H1 (cell line): ENCODE measurements at regions of chr11 and their contacts with region 1.

Region 1: DNA sequence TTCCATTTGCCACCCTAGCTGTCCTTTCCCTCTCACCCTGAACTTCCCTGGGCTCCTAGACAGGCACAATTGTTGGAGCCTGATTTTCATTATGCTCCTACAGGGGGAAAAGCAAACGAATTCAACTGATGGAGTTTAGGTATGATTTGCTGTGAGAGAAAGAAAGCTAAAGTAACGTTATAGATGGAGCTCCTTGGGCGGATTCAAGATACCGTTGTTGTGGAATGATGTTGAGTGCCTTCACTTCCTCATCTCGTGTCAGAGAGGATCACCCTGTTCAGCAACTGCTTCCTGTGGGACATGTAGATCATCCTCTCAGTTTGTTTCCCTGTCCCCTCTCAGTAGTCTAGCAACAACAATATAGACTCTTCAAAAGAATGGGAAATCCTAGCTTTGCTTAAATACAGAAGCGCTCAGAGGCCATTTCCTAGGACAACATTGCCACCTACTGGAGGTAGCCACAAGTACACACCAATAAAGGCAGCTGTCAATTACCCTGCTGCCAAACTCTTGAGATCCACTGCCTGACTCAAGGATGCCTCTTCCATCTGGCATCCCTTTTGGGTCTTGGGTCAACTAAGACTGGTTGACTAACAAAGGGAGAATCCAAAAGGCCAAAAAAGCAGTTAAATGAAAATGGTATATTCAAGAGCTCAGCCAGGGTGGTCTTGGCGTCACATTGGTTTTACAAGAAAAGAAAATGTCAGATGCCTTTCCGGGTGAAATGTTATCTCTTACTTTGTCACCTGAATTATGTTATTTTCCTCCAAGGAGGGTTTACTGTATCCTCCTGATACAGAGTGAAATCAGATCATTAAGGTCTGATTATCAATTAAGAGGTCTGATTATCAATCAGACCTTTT is 13.5 kb upstream of the DTX4 start:
- DNase-seq: peak in 1 of 2 experiments; percentile 67
- H3K4me3 ChIP-seq: no peak overlapping the region
- H3K27ac ChIP-seq: no peak overlapping the region; the same call in 1 of the 2 replicates
- H3K4me1 ChIP-seq: peaks cover 0 to 4% (median 0%) of the 10 kb centered on the region in 4 experiments; a peak in 2 of 7 replicates
- H3K27me3 ChIP-seq: no peaks in the 10 kb centered on the region
- CTCF ChIP-seq: peak; percentile 29 to 87 (median 80)
- EP300 ChIP-seq: no peak
- POLR2A ChIP-seq: no peak
- RAD21 ChIP-seq: peak; percentile 91 to 92

Region 2: DNA sequence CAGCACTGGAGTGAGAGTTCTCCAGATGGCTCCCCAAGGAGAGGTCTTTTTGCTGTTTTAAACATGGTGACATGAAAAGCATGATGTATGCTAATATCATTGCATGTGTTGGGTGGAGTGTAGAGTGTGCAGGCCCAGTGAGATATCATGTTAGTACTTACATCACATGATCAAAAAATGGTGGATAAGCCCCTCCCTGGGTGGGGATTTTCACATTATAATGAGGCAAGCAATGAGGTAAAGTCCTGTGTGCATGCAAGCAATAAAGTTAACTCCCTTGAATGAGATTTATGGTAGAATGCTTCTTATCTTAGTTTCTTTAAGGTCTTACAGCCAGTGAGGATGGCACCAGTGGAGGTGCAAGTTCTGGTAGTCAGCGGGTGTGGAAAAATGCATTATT is 42.9 kb before region 1 on chr11:
- CTCF ChIA-PET with region 1: no interaction called
- POLR2A ChIA-PET with region 1: no interaction called
- DNase-seq: no peak
- H3K4me3 ChIP-seq: no peak overlapping the region
- H3K27ac ChIP-seq: no peak overlapping the region
- H3K4me1 ChIP-seq: no peaks in the 10 kb centered on the region
- H3K27me3 ChIP-seq: no peaks in the 10 kb centered on the region
- CTCF ChIP-seq: no peak
- EP300 ChIP-seq: no peak
- POLR2A ChIP-seq: no peak
- RAD21 ChIP-seq: no peak

Region 3: DNA sequence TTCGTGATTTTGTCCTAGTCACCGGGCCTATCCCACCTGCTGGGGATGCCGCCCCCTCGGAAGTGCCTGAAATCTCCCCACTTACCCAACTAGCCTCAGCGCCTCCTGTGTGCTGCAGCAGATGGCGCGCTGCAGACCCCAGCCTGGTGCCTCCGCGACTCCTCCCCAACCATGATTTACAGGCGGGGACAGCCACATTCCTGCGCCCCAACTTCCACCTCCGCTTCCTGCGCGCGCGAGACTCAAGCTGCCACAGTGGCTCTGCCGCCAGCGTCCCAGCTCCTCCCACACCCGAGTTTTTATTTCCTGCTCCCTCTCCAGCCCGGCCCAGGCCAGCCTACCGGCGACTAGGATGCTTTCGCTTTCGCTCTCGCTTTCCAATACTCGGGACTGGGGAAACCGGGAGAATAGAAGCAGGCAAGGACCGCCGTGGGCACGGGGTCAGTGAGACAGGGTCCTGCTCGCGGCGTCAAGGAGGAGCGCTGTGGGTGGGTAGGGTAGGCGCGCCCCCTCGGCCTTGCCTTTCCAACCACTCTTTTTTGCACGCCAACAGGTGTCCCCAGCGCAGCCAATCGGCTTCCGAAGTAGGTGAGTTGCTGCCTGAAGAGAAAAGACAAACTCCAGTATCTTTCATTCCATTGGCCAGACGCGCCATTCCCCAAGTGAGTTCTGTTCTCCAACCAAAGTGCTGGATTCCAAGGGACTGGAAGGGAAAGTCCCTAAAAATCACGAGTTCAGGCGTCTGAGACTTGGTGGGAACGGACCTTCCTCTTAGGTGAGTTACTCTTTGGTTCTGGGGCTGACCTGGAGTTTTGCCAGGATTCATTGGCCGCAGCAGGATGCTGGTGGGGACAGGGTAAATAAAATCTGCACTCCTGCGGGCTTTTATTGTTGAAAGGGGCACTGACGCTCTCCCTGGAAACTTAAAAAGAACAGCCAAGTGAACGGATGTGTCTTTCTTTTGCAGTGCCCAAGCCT is 15.6 kb before region 1 on chr11 and contains the start of gene FAM111A:
- CTCF ChIA-PET with region 1: interaction called, 65 read pairs
- POLR2A ChIA-PET with region 1: interaction called, 12 read pairs
- DNase-seq: peak; percentile 67 to 83
- H3K4me3 ChIP-seq: peak within 1 kb of the TSS; percentile 54 to 86 (median 77)
- H3K27ac ChIP-seq: peak within 1 kb of the TSS; percentile 65; the same call in 1 of the 2 replicates
- H3K4me1 ChIP-seq: peaks cover 0 to 8% (median 0%) of the 10 kb centered on the region in 4 experiments; a peak in 4 of 7 replicates
- H3K27me3 ChIP-seq: no peaks in the 10 kb centered on the region; a peak in 1 of 7 replicates
- CTCF ChIP-seq: peak; percentile 25 to 55 (median 29); a peak in 3 of 4 replicates
- EP300 ChIP-seq: no peak
- POLR2A ChIP-seq: peak in 1 of 2 experiments; percentile 18; a peak in 1 of 3 replicates
- RAD21 ChIP-seq: no peak; a peak in 1 of 4 replicates
- total RNA-seq, gene FAM111A: 29.9 and 31.1 TPM in 2 replicates

Region 4: GRCh38 chr11:59186130-59186594 is 27.7 kb after region 1 on chr11:
- CTCF ChIA-PET with region 1: interaction called, 22 read pairs
- POLR2A ChIA-PET with region 1: no interaction called
- DNase-seq: peak in 1 of 2 experiments; percentile 82
- H3K4me3 ChIP-seq: no peak overlapping the region
- H3K27ac ChIP-seq: no peak overlapping the region
- H3K4me1 ChIP-seq: peaks cover 0 to 4% (median 0%) of the 10 kb centered on the region in 4 experiments; a peak in 2 of 7 replicates
- H3K27me3 ChIP-seq: no peaks in the 10 kb centered on the region
- CTCF ChIP-seq: peak; percentile 65 to 73 (median 72)
- EP300 ChIP-seq: no peak
- POLR2A ChIP-seq: no peak
- RAD21 ChIP-seq: peak; percentile 33 to 39; a peak in 3 of 4 replicates